ENCODE measurements at regions of chr7 and their contacts with region 1.

Region 1: GRCh38 chr7:17301471-17302456 is 3.3 kb downstream of the AHR start:
- DNase-seq: peak in 2 of 5 donors; percentile 39 to 55
- H3K4me3 ChIP-seq: no peak overlapping the region
- H3K27ac ChIP-seq: no peak overlapping the region
- H3K4me1 ChIP-seq: peaks cover 0 to 13% (median 4%) of the 10 kb centered on the region in 3 donors
- H3K27me3 ChIP-seq: no peaks in the 10 kb centered on the region
- CTCF ChIP-seq: peak; percentile 30

Region 2: DNA sequence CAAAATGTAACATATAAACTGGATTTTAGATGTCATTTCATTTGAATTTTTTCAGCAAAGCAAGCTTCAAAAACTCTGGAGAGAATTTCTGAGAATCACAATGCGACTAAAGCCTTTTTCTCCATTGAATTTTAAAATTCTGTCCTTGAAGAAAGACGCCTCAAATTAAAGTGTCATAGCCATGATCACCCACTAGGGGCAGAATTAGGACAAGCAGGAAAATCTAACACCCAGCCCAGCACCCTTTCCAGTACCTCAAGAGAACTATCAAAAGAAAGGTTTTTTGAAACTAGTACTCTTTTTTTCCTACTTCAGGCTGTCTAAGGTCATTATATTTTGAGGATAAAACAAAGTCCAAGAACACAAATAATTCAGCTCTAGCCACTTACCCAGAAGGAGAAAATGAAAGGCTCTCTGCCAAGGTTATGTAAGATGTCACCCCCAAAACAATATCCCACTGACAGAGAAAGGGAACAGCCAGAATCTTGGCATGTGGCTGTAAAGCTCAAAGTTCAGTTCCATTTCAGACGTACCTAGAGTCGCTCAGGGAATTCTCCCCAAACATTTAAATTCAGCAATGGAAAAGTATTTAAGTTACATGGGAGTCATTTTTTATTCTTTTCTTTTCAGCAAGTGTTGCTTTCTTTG is 339.1 kb after region 1 on chr7:
- intact Hi-C with region 1: loop called (anchors 10 kb)
- DNase-seq: peak in 1 of 5 donors; percentile 57
- H3K4me3 ChIP-seq: no peak overlapping the region
- H3K27ac ChIP-seq: no peak overlapping the region
- H3K4me1 ChIP-seq: no peaks in the 10 kb centered on the region
- H3K27me3 ChIP-seq: no peaks in the 10 kb centered on the region
- CTCF ChIP-seq: peak; percentile 57

Measured in kidney (tissue), 22 donors.